Caco-2 (cell line): ENCODE measurements at regions of chr11 and their contacts with region 1.

Region 1: DNA sequence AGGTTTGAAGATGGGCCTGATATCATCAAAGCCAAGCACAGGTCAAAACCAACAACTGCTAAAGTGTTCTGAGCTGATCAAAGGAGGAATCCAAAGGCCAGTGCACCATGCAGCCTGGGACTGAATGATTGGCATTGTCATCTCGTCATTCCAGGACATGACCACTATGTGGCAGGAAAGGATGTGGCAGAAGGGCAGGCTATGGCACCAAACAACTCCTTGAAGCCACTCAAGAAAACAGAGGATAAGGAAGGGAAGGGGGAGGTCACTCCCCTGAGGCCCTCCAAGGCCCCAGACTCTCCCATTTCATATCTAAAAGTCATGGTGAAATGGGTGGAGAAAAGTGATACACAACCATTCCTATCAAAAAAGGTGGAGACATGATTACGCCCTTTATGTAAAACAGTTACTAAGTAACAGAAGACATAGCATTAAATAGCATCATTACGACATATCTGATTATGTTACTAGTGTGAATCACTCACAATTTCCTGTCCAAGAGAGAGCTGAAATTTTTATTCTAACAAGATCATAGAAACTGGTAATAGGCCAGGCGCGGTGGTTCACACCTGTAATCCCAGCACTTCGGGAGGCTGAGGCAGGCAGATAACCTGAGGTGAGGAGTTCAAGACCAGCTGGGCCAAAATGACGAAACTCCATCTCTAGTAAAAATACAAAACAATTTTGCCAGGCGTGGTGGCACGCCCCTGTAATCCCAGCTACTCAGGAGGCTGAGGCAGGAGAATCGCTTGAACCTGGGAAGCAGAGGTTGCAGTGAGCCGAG is 49.3 kb downstream of the AHNAK start:
- DNase-seq: peak; percentile 75 to 82
- H3K4me3 ChIP-seq: no peak overlapping the region
- H3K4me3 Mint-ChIP-seq: no peak overlapping the region
- H3K27ac Mint-ChIP-seq: peak overlapping the region; percentile 76
- H3K4me1 ChIP-seq: peaks cover 48% of the 10 kb centered on the region
- H3K4me1 Mint-ChIP-seq: peaks cover 33% of the 10 kb centered on the region
- H3K27me3 ChIP-seq: no peaks in the 10 kb centered on the region
- H3K27me3 Mint-ChIP-seq: no peaks in the 10 kb centered on the region
- CTCF ChIP-seq: peak; percentile 59 to 68

Region 2: GRCh38 chr11:62514151-62514550 is 16.8 kb after region 1 on chr11:
- CTCF ChIA-PET with region 1: no interaction called
- POLR2A ChIA-PET with region 1: no interaction called
- intact Hi-C with region 1: loop called (anchors 2 kb)
- DNase-seq: no peak
- H3K4me3 ChIP-seq: no peak overlapping the region
- H3K4me3 Mint-ChIP-seq: no peak overlapping the region
- H3K27ac Mint-ChIP-seq: peak overlapping the region; percentile 66
- H3K4me1 ChIP-seq: peaks cover 34% of the 10 kb centered on the region
- H3K4me1 Mint-ChIP-seq: peaks cover 20% of the 10 kb centered on the region
- H3K27me3 ChIP-seq: no peaks in the 10 kb centered on the region
- H3K27me3 Mint-ChIP-seq: no peaks in the 10 kb centered on the region
- CTCF ChIP-seq: no peak

Region 3: GRCh38 chr11:62551696-62552250 is 54.4 kb after region 1 on chr11:
- CTCF ChIA-PET with region 1: interaction called, 3 read pairs
- POLR2A ChIA-PET with region 1: no interaction called
- intact Hi-C with region 1: loop called (anchors 2 kb)
- DNase-seq: peak; percentile 74 to 77
- H3K4me3 ChIP-seq: no peak overlapping the region
- H3K4me3 Mint-ChIP-seq: peak overlapping the region; percentile 71
- H3K27ac Mint-ChIP-seq: peak overlapping the region; percentile 96
- H3K4me1 ChIP-seq: peaks cover 87% of the 10 kb centered on the region
- H3K4me1 Mint-ChIP-seq: peaks cover 61% of the 10 kb centered on the region
- H3K27me3 ChIP-seq: no peaks in the 10 kb centered on the region
- H3K27me3 Mint-ChIP-seq: no peaks in the 10 kb centered on the region
- CTCF ChIP-seq: no peak